ENCODE measurements at regions of chr19 and their contacts with region 1.

Region 1: GRCh38 chr19:19459707-19460251 is 54.3 kb downstream of the GATAD2A start:
- DNase-seq: peak; percentile 90
- H3K4me3 Mint-ChIP-seq: peak overlapping the region; percentile 89
- H3K27ac Mint-ChIP-seq: peak overlapping the region; percentile 98
- H3K4me1 Mint-ChIP-seq: peaks cover 62% of the 10 kb centered on the region
- H3K27me3 Mint-ChIP-seq: no peaks in the 10 kb centered on the region

Region 2: GRCh38 chr19:19404879-19405860 is 54.6 kb before region 1 on chr19 and contains the start of gene GATAD2A:
- intact Hi-C with region 1: loop called (anchors 5 kb)
- DNase-seq: peak; percentile 97
- H3K4me3 Mint-ChIP-seq: peak within 1 kb of the TSS; percentile 90
- H3K27ac Mint-ChIP-seq: peak within 1 kb of the TSS; percentile 93
- H3K4me1 Mint-ChIP-seq: peaks cover 55% of the 10 kb centered on the region
- H3K27me3 Mint-ChIP-seq: no peaks in the 10 kb centered on the region
- total RNA-seq, gene GATAD2A: 134 and 135 TPM in 2 replicates

Region 3: DNA sequence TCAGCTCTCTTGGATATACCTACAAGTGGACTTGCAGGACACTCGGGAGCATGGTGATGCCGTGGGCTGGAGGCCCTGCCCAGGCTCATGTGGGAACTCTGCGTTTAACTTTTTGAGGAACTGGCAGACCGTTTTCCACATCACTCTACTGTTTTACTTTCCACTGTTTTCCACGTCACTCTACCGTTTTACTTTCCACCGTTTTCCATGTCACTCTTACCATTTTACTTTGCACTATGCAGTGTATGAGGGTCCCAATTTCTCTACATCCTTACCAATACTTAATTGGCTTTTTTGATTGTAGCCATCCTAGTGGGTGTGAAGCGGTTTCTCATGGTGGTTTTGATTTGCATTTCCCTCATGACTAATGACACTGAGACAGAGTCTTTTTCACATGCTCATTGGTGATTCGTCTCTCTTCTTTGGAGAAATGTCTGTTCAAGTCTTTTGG is 13.8 kb before region 1 on chr19:
- intact Hi-C with region 1: loop called (anchors 1 kb)
- DNase-seq: peak; percentile 70
- H3K4me3 Mint-ChIP-seq: peak overlapping the region; percentile 49
- H3K27ac Mint-ChIP-seq: peak overlapping the region; percentile 79
- H3K4me1 Mint-ChIP-seq: peaks cover 59% of the 10 kb centered on the region
- H3K27me3 Mint-ChIP-seq: no peaks in the 10 kb centered on the region

Region 4: DNA sequence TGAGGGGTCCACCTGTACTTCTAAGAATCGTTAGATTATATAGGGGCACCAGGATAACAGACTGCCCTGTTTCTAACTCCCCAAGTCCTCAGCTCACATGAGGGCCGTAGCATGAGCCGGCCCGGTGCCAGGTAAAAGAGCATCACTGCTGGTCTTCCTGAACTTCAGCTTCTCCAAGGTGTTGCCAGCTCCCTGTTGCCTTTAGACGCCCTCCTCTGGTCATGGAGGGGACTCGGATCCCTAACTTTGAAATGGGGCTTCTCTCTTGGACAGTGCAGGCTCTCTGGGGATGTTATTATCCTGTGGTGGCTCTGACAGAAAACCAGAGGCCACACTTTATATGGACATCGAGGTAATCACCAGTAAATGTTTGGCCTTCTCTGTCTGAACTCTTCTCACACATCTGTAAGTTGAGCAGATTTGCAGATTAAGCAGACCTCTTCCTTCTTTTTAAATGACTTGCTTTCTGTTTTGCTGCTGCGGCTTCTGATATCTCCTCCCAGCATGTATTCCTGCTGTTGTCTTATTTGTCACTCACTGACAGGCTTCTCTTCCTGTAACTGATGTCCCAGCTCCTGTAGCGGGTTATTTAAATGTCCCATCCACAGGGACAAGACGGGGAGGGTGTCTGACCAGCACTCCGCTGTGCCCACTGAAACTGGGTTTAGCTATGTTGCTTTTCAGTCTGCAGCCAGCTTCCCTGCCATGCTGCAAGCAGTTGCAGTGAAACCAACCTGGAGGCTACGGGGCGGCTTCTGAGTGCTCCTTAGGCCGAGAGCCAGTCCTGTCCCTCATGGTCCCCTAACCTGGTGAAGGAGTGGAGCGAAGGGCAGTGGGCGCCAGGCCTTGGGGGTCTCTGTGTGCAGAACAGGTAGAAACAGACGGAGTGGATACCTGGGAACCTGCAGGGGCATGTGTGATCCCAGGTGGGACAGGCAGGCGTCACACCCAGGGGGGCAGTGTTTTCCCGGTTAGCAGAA is 16.4 kb after region 1 on chr19:
- intact Hi-C with region 1: loop called (anchors 2 kb)
- DNase-seq: no peak
- H3K4me3 Mint-ChIP-seq: no peak overlapping the region
- H3K27ac Mint-ChIP-seq: peak overlapping the region; percentile 75
- H3K4me1 Mint-ChIP-seq: peaks cover 63% of the 10 kb centered on the region
- H3K27me3 Mint-ChIP-seq: no peaks in the 10 kb centered on the region

Region 5: GRCh38 chr19:19597809-19598306 is 138.1 kb after region 1 on chr19:
- intact Hi-C with region 1: loop called (anchors 2 kb)
- DNase-seq: peak; percentile 91
- H3K4me3 Mint-ChIP-seq: peak overlapping the region; percentile 82
- H3K27ac Mint-ChIP-seq: peak overlapping the region; percentile 96
- H3K4me1 Mint-ChIP-seq: peaks cover 61% of the 10 kb centered on the region
- H3K27me3 Mint-ChIP-seq: no peaks in the 10 kb centered on the region